ENCODE measurements at regions of chr17 and their contacts with region 1.

Region 1: DNA sequence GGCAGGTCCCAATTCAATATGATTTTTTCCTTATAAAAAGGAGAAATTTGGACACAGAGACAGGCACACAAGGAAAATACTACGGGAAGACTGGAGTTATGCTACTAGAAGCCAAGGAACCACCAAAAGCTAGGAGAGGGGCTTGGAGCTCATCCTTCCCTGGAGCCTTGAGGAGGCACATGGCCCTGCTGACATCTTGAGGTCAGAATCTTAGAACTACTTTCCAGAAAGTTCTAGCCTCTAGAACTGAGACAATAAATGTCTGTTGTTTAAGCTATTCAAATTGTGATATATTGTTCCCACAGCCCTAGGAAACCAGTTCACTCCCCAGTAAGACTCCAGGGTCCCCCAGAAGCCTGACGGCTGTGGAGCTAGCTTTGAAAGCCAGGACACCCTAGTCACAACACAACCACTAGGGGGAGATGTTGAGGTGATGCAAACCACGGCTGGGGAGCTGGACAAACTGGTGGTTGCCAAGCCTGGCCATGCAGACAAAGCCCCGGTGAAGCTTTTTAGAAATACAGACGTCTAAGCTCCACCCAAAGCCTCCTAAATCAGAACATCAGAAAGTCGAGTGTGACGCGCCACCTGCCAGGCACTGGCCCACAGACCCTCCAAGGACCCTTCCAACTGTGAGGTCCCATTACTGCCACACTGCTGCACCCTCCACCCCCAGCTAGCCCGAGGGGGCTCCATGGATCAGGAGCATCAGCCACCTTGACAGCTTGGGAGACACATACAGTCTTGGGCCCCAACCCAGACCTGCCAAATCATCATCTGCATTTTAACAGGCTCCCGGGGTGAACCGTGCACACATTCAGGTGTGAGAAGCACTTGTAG is 106.4 kb downstream of the SLC39A11 start:
- DNase-seq: peak; percentile 57 to 79 (median 76)
- H3K4me3 ChIP-seq: no peak overlapping the region
- H3K27ac ChIP-seq: no peak overlapping the region
- H3K4me1 ChIP-seq: peaks cover 0 to 1% (median 0%) of the 10 kb centered on the region in 4 experiments
- H3K27me3 ChIP-seq: no peaks in the 10 kb centered on the region

Region 2: GRCh38 chr17:72967977-72968585 is 18.0 kb before region 1 on chr17:
- CTCF ChIA-PET with region 1: no interaction called
- POLR2A ChIA-PET with region 1: no interaction called
- DNase-seq: no peak
- H3K4me3 ChIP-seq: no peak overlapping the region
- H3K27ac ChIP-seq: no peak overlapping the region
- H3K4me1 ChIP-seq: no peaks in the 10 kb centered on the region
- H3K27me3 ChIP-seq: no peaks in the 10 kb centered on the region

Region 3: DNA sequence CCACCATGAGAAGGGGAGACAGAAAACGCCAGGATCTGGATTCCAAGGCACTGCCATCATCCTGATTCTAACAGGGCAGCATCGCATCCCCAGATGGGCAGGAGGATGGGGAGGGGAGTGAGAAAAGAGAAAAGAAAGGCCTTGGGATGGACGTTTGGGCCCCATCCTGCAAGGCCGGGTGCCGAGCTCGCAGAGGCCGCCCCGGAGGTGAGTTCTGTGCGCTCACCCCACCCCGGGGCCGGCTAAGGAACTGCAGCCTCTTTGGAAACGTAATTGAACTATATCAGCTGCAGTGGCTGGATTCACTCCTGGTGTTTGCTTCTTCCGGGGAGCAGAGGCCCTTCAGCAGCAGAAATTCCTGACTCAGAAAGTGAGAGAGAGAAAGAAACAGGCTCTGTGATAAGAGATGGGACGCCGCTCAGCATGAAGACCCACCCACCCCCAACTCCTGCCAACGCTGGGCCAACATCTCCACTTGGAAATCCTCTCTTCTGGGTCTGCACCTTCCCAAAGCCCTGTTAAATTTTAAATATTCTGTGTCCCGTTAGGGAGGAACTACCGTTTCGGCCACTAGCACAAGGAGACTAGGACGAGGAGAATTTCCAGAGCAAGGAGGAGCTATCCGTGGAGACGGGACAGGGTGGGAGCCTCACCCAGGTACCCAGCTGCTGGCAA is 170.2 kb after region 1 on chr17:
- CTCF ChIA-PET with region 1: interaction called, 11 read pairs
- POLR2A ChIA-PET with region 1: no interaction called
- DNase-seq: peak in 2 of 3 donors; percentile 52
- H3K4me3 ChIP-seq: no peak overlapping the region
- H3K27ac ChIP-seq: no peak overlapping the region
- H3K4me1 ChIP-seq: peaks cover 0 to 7% (median 3%) of the 10 kb centered on the region in 4 experiments
- H3K27me3 ChIP-seq: peaks cover 0 to 20% (median 6%) of the 10 kb centered on the region in 5 experiments

Measured in common myeloid progenitor, CD34-positive (primary cell).